H1 (cell line): ENCODE measurements at regions of chr2 and their contacts with region 1.

Region 1: DNA sequence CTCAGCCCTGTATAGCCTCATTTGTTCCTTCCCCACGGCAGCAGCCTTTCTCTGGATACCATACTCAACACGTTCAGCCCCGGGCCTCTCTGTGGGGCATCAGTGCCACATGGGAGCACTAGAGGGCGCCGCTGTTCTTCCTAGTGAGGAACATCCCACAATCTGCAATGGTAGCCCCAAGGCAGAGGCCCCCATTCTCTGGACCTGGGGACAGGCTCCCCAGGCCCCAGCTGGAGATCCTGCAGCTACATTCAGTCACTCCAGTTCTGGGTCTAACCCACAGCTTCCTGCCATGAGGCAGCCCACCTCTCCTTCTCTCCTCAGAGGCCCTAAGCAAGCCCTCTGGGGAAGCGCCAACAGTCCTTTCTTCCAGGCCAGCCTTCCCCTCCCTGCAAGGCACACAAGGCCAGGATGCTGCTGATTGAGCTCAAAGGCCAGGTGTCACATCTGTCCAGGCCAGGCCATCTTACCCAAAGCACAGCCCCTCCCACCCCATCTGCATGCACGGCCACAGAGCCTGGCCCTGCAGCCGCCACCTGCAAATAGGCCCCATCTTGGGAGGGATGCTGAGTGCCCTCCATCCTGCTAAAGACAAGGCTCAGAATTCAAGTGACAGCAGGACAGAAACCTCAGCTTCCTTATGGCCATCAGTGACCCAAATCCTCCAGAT is 14.3 kb upstream of the SFXN5 start:
- DNase-seq: peak; percentile 57 to 96
- H3K4me3 ChIP-seq: no peak overlapping the region
- H3K27ac ChIP-seq: no peak overlapping the region
- H3K4me1 ChIP-seq: peaks cover 0 to 9% (median 5%) of the 10 kb centered on the region in 4 experiments; a peak in 6 of 7 replicates
- H3K27me3 ChIP-seq: no peaks in the 10 kb centered on the region
- CTCF ChIP-seq: peak; percentile 94 to 95 (median 95)
- EP300 ChIP-seq: no peak
- POLR2A ChIP-seq: no peak
- RAD21 ChIP-seq: peak; percentile 97 to 98

Region 2: DNA sequence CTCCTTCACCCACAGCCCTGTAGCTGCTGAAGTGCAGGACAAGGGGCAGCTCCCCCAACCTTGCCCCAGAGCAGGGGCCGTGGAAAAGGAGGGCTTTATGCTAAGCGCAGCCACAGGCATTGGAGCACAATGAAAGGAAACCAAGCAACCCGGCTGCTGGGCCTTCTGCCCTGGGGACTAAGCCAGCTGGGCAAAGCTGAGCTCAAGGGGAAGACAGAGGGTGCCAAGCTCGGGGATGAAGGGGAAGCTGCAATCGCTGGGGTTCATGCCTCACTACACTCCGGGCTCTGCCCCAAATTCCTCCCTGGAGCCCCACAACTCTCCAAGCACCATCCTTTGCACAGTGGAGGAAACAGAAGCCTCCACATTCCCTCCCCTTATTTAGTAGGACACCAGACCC is 26.7 kb before region 1 on chr2:
- CTCF ChIA-PET with region 1: interaction called, 30 read pairs
- POLR2A ChIA-PET with region 1: no interaction called
- DNase-seq: no peak
- H3K4me3 ChIP-seq: no peak overlapping the region
- H3K27ac ChIP-seq: no peak overlapping the region
- H3K4me1 ChIP-seq: peaks cover 4 to 9% (median 8%) of the 10 kb centered on the region in 4 experiments
- H3K27me3 ChIP-seq: no peaks in the 10 kb centered on the region
- CTCF ChIP-seq: no peak
- EP300 ChIP-seq: no peak
- POLR2A ChIP-seq: no peak
- RAD21 ChIP-seq: no peak

Region 3: GRCh38 chr2:73100956-73101355 is 15.1 kb after region 1 on chr2:
- CTCF ChIA-PET with region 1: interaction called, 55 read pairs
- POLR2A ChIA-PET with region 1: no interaction called
- DNase-seq: no peak
- H3K4me3 ChIP-seq: no peak overlapping the region
- H3K27ac ChIP-seq: no peak overlapping the region
- H3K4me1 ChIP-seq: peaks cover 4 to 11% (median 9%) of the 10 kb centered on the region in 4 experiments; a peak in 5 of 7 replicates
- H3K27me3 ChIP-seq: no peaks in the 10 kb centered on the region
- CTCF ChIP-seq: no peak
- EP300 ChIP-seq: no peak
- POLR2A ChIP-seq: no peak
- RAD21 ChIP-seq: no peak

Region 4: GRCh38 chr2:73112913-73113633 is 27.2 kb after region 1 on chr2 and contains the start of gene RAB11FIP5:
- CTCF ChIA-PET with region 1: interaction called, 63 read pairs
- POLR2A ChIA-PET with region 1: interaction called, 11 read pairs
- DNase-seq: peak in 1 of 2 experiments; percentile 91
- H3K4me3 ChIP-seq: peak within 1 kb of the TSS; percentile 58 to 73 (median 66)
- H3K27ac ChIP-seq: no peak within 1 kb of the TSS
- H3K4me1 ChIP-seq: peaks cover 10 to 14% (median 12%) of the 10 kb centered on the region in 4 experiments; a peak in 6 of 7 replicates
- H3K27me3 ChIP-seq: no peaks in the 10 kb centered on the region; a peak in 2 of 7 replicates
- CTCF ChIP-seq: no peak
- EP300 ChIP-seq: no peak
- POLR2A ChIP-seq: 0 out of 3 replicates have a peak, but pooled peaks of 1 of the 2 experiments have one; percentile 26
- RAD21 ChIP-seq: no peak
- total RNA-seq, gene RAB11FIP5: 13.5 and 17.0 TPM in 2 replicates

Region 5: GRCh38 chr2:73156539-73157124 is 70.8 kb after region 1 on chr2:
- CTCF ChIA-PET with region 1: interaction called, 321 read pairs
- POLR2A ChIA-PET with region 1: interaction called, 12 read pairs
- DNase-seq: peak; percentile 77 to 89
- H3K4me3 ChIP-seq: peak overlapping the region; percentile 20 to 54 (median 38); a peak in 6 of 8 replicates
- H3K27ac ChIP-seq: no peak overlapping the region
- H3K4me1 ChIP-seq: peaks cover 0 to 3% (median 0%) of the 10 kb centered on the region in 4 experiments; a peak in 2 of 7 replicates
- H3K27me3 ChIP-seq: peaks cover 0 to 7% (median 2%) of the 10 kb centered on the region in 4 experiments; a peak in 4 of 7 replicates
- CTCF ChIP-seq: peak; percentile 95 to 99 (median 95)
- EP300 ChIP-seq: peak in 1 of 2 experiments; percentile 31; a peak in 1 of 3 replicates
- POLR2A ChIP-seq: no peak
- RAD21 ChIP-seq: peak; percentile 95 to 98

Region 6: DNA sequence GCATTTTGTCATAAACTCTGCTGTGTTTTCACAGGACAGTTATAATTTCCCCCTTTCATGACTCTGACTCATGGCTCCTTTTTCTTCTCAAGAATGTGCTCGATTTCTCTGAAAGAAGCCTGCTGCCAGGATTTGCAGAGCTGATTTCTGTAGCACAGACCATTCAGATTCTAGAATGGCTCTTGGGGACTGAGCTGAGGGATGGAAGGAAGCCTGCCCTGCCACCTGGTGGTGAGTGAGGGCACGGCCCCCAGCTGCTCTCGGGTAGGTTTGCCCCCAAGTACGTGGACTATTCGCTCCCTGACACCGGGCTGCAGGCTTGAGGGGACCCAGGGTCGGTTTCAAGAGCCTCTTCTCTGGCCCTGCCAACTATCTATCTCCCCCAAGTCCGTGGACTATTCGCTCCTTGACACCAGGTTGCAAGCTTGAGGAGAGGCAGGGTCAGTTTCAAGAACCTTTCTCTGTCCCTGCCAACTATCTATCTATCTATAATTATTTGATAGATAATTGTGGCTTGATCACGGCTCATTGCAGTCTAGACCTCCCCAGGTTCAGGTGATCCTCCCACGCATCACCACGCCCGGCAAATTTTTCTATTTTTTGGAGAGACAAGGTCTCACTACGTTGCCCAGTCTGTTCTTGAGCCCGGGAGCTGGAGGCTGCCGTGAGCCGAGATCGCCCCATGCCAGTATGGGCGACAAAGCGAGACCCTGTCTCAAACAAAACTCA is 126.8 kb after region 1 on chr2:
- CTCF ChIA-PET with region 1: interaction called, 20 read pairs
- POLR2A ChIA-PET with region 1: interaction called, 3 read pairs
- DNase-seq: peak in 1 of 2 experiments; percentile 90
- H3K4me3 ChIP-seq: no peak overlapping the region
- H3K27ac ChIP-seq: no peak overlapping the region
- H3K4me1 ChIP-seq: peaks cover 2 to 3% (median 3%) of the 10 kb centered on the region in 4 experiments; a peak in 4 of 7 replicates
- H3K27me3 ChIP-seq: peaks cover 0 to 4% (median 2%) of the 10 kb centered on the region in 4 experiments; a peak in 1 of 7 replicates
- CTCF ChIP-seq: peak; percentile 85 to 98 (median 97)
- EP300 ChIP-seq: no peak
- POLR2A ChIP-seq: no peak
- RAD21 ChIP-seq: peak; percentile 79 to 87